MCF 10A (cell line): ENCODE measurements at regions of chr11 and their contacts with region 1.

Region 1: DNA sequence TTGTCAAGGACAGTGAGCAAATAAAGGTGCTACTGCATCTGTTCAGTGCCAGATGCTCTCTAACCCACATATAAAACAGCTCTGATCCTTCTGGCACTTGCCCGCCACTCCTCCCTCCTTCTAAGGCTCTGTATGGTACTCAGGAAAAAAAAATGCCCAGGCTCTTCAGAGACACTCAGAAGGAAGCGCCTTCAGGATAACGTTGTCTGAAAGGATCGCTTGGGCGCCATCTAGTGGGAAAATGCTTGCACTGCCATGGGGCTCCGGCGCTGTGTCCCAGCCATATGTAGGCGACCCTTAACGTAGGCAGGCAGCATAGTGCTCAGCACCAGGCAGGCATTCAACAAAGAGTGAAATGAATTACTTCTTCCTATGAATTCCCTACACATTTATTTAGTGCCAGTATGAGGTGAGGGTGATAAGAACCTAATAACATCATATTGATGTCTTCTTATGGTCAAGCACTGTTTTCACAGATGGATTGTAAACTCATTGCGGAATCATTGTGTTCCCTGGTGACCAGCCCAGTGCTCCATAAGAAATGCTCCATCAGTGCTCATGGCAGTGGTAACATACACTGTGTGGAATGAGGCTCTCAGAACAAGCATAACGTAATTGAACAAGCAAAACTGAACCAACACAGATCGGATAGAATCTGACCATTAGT is 39.6 kb downstream of the PAMR1 start:
- DNase-seq: peak; percentile 80
- H3K4me3 Mint-ChIP-seq: no peak overlapping the region
- H3K27ac Mint-ChIP-seq: no peak overlapping the region
- H3K4me1 Mint-ChIP-seq: peaks cover 17% of the 10 kb centered on the region
- H3K27me3 Mint-ChIP-seq: peaks cover 10% of the 10 kb centered on the region
- CTCF ChIP-seq: peak; percentile 92

Region 2: DNA sequence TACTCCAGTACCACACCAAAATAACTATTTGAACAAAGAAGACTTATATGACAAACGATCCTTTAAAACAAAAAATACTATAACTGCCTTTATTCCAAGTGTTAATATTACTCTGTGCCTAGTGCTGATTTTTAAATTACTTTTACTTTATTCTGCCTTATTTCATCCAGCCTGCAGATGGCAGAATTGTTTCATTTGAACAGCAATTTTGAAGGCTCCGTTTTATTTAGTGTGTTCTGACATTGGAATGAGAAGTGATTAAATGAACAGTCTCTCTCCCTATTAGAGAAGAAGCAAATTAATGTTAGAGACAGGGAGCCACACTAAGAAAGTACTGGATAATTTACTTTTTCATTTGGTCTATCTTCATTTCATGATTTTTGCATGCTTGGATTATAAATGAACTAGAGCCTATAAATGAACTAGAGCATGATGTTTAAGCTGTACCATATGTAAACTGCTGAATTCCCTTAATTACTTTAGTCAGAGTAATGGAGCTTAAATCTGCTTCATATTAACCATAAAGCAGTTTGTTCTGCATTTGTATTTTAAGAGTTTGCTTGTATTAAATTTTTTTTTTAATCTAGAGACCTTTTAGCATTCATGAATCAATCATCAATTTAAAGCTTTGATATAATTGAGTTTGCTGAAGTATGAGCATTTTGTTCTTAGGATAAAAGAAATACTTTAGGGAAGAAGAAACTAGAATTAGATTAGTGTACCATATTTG is 559.5 kb before region 1 on chr11:
- CTCF ChIA-PET with region 1: interaction called, 5 read pairs
- POLR2A ChIA-PET with region 1: no interaction called
- intact Hi-C with region 1: loop called (anchors 1 kb)
- DNase-seq: peak; percentile 59
- H3K4me3 Mint-ChIP-seq: no peak overlapping the region
- H3K27ac Mint-ChIP-seq: no peak overlapping the region
- H3K4me1 Mint-ChIP-seq: peaks cover 34% of the 10 kb centered on the region
- H3K27me3 Mint-ChIP-seq: no peaks in the 10 kb centered on the region
- CTCF ChIP-seq: peak; percentile 68

Region 3: DNA sequence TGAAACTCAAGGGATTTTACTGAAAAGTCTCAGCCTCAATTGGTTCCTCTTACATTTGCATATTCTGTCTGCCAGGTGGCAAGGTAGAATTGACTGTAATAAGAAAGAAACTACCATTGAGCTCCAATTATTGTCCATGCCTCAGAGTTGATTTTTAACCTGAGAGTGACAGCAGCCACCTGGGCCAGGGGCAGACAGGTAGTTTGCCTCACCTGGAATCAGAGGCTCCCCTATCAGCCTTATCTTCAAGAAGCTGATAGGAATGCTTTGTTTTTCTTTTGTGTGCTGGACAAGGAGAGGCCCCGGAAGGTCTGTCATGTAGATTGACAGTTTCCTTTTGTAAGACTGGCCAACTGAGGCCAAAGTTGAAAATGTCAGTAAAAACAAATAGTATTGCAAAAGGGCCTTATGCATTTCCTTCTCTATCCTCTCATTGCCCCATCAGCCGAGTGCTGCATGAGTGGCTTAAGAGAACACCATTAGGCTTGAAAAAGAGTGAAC is 312.7 kb before region 1 on chr11:
- CTCF ChIA-PET with region 1: no interaction called
- POLR2A ChIA-PET with region 1: no interaction called
- intact Hi-C with region 1: no loop called
- DNase-seq: peak; percentile 74
- H3K4me3 Mint-ChIP-seq: no peak overlapping the region
- H3K27ac Mint-ChIP-seq: no peak overlapping the region
- H3K4me1 Mint-ChIP-seq: peaks cover 20% of the 10 kb centered on the region
- H3K27me3 Mint-ChIP-seq: no peaks in the 10 kb centered on the region
- CTCF ChIP-seq: no peak

Region 4: GRCh38 chr11:35305670-35306382 is 180.0 kb before region 1 on chr11:
- CTCF ChIA-PET with region 1: no interaction called
- POLR2A ChIA-PET with region 1: no interaction called
- intact Hi-C with region 1: no loop called
- DNase-seq: peak; percentile 61
- H3K4me3 Mint-ChIP-seq: no peak overlapping the region
- H3K27ac Mint-ChIP-seq: no peak overlapping the region
- H3K4me1 Mint-ChIP-seq: peaks cover 38% of the 10 kb centered on the region
- H3K27me3 Mint-ChIP-seq: no peaks in the 10 kb centered on the region
- CTCF ChIP-seq: peak; percentile 18

Region 5: DNA sequence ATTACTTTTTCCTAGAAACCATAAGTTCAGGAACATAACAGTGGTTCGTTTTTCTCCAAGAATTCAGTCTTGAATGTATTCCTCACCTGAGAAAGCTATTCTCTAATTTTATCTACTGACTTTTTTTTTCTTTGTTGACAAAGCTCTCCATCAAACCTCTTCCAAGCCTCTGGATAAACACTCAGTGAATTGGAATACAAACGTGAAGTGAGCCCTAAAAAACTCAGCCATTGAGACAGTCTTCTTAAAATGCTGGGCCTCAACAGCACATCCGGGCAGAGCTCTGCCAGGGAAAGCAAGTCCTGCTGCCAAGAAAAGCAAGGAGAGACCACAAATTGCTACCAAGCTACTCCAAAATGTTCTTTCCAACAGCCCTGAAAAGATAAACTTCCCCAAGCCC is 58.7 kb before region 1 on chr11:
- CTCF ChIA-PET with region 1: interaction called, 5 read pairs
- POLR2A ChIA-PET with region 1: no interaction called
- intact Hi-C with region 1: loop called (anchors 5 kb)
- DNase-seq: peak; percentile 43
- H3K4me3 Mint-ChIP-seq: peak overlapping the region; percentile 14
- H3K27ac Mint-ChIP-seq: no peak overlapping the region
- H3K4me1 Mint-ChIP-seq: peaks cover 9% of the 10 kb centered on the region
- H3K27me3 Mint-ChIP-seq: peaks cover 72% of the 10 kb centered on the region
- CTCF ChIP-seq: no peak

Region 6: DNA sequence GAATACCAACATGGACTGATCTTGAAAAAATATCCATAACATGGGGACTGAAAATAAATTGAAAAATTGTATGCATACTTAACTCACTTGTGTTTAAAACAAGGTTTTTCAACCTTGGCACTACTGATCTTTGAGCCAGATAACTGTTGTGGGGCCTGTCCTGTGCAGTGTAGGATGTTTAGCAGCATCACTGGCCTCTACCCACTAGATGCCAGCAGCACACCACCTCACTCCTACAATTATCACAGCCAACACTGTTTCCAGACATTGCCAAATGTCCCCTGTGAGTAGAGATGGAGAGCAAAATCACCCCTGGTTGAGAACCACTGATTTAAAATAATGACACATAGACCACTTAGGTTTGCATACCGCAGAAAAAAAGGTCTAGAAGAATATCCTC is 21.5 kb before region 1 on chr11:
- CTCF ChIA-PET with region 1: interaction called, 5 read pairs
- POLR2A ChIA-PET with region 1: interaction called, 3 read pairs
- intact Hi-C with region 1: loop called (anchors 1 kb)
- DNase-seq: peak; percentile 19
- H3K4me3 Mint-ChIP-seq: no peak overlapping the region
- H3K27ac Mint-ChIP-seq: no peak overlapping the region
- H3K4me1 Mint-ChIP-seq: no peaks in the 10 kb centered on the region
- H3K27me3 Mint-ChIP-seq: peaks cover 29% of the 10 kb centered on the region
- CTCF ChIP-seq: no peak

Region 7: DNA sequence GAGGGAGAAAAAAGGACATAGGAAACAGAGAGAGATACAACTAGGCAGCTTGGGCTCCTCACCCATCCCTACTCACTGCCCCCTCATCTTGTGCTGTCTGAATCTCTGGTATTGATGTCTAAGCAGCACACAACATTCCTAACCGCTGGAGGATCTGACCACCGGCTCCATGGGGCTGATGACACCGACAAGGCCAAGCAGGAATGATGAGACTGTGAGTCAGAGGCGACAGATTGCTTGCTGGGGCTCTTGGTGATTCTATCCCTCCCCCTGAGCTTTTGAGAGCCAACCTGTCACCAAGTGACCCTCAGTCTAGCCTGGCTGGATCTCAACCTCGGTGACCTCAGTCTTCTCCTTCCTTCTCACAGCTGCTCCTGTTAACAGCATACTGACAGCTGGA is 25.9 kb after region 1 on chr11:
- CTCF ChIA-PET with region 1: interaction called, 11 read pairs
- POLR2A ChIA-PET with region 1: interaction called, 3 read pairs
- intact Hi-C with region 1: no loop called
- DNase-seq: no peak
- H3K4me3 Mint-ChIP-seq: no peak overlapping the region
- H3K27ac Mint-ChIP-seq: no peak overlapping the region
- H3K4me1 Mint-ChIP-seq: peaks cover 6% of the 10 kb centered on the region
- H3K27me3 Mint-ChIP-seq: no peaks in the 10 kb centered on the region
- CTCF ChIP-seq: no peak

Region 8: GRCh38 chr11:36034551-36035331 is 549.0 kb after region 1 on chr11:
- CTCF ChIA-PET with region 1: no interaction called
- POLR2A ChIA-PET with region 1: no interaction called
- intact Hi-C with region 1: loop called (anchors 10 kb)
- DNase-seq: peak; percentile 56
- H3K4me3 Mint-ChIP-seq: peak overlapping the region; percentile 26
- H3K27ac Mint-ChIP-seq: peak overlapping the region; percentile 77
- H3K4me1 Mint-ChIP-seq: peaks cover 43% of the 10 kb centered on the region
- H3K27me3 Mint-ChIP-seq: no peaks in the 10 kb centered on the region
- CTCF ChIP-seq: no peak